ENCODE measurements at regions of chr18 and their contacts with region 1.

Region 1: GRCh38 chr18:47748847-47749599 is 181.4 kb downstream of the SMAD2 start:
- DNase-seq: peak; percentile 75 to 90 (median 86)
- ATAC-seq: peak; percentile 99
- H3K4me3 ChIP-seq: no peak overlapping the region
- H3K4me1 ChIP-seq: peaks cover 2% of the 10 kb centered on the region
- CTCF ChIP-seq: peak; percentile 98

Region 2: GRCh38 chr18:47397671-47398319 is 351.2 kb before region 1 on chr18:
- intact Hi-C with region 1: loop called in 1 of 2 experiments (anchors 5 kb)
- DNase-seq: peak in 1 of 3 donors; percentile 45
- ATAC-seq: peak; percentile 36
- H3K4me3 ChIP-seq: no peak overlapping the region
- H3K4me1 ChIP-seq: no peaks in the 10 kb centered on the region
- CTCF ChIP-seq: no peak

Region 3: GRCh38 chr18:47595815-47596496 is 153.1 kb before region 1 on chr18:
- intact Hi-C with region 1: loop called in 1 of 2 experiments (anchors 5 kb)
- DNase-seq: peak in 2 of 3 donors; percentile 55 to 67
- ATAC-seq: peak; percentile 58
- H3K4me3 ChIP-seq: no peak overlapping the region
- H3K4me1 ChIP-seq: no peaks in the 10 kb centered on the region
- CTCF ChIP-seq: peak; percentile 45